ENCODE measurements at regions of chr19 and their contacts with region 1.

Region 1: GRCh38 chr19:15379083-15379995 is at the start of gene AKAP8:
- DNase-seq: peak; percentile 98
- H3K4me3 Mint-ChIP-seq: peak within 1 kb of the TSS; percentile 93
- H3K27ac Mint-ChIP-seq: peak within 1 kb of the TSS; percentile 96
- H3K4me1 Mint-ChIP-seq: peaks cover 48% of the 10 kb centered on the region
- H3K27me3 Mint-ChIP-seq: no peaks in the 10 kb centered on the region
- total RNA-seq, gene AKAP8: 27.1 to 30.3 TPM

Region 2: GRCh38 chr19:14689598-14690503 is 689.5 kb before region 1 on chr19 and contains the start of gene ZNF333:
- CTCF ChIA-PET with region 1: no interaction called
- intact Hi-C with region 1: loop called (anchors 5 kb)
- DNase-seq: peak; percentile 100
- H3K4me3 Mint-ChIP-seq: peak within 1 kb of the TSS; percentile 96
- H3K27ac Mint-ChIP-seq: peak within 1 kb of the TSS; percentile 99
- H3K4me1 Mint-ChIP-seq: peaks cover 18% of the 10 kb centered on the region
- H3K27me3 Mint-ChIP-seq: no peaks in the 10 kb centered on the region
- total RNA-seq, gene ZNF333: 28.6 to 31.7 TPM

Region 3: DNA sequence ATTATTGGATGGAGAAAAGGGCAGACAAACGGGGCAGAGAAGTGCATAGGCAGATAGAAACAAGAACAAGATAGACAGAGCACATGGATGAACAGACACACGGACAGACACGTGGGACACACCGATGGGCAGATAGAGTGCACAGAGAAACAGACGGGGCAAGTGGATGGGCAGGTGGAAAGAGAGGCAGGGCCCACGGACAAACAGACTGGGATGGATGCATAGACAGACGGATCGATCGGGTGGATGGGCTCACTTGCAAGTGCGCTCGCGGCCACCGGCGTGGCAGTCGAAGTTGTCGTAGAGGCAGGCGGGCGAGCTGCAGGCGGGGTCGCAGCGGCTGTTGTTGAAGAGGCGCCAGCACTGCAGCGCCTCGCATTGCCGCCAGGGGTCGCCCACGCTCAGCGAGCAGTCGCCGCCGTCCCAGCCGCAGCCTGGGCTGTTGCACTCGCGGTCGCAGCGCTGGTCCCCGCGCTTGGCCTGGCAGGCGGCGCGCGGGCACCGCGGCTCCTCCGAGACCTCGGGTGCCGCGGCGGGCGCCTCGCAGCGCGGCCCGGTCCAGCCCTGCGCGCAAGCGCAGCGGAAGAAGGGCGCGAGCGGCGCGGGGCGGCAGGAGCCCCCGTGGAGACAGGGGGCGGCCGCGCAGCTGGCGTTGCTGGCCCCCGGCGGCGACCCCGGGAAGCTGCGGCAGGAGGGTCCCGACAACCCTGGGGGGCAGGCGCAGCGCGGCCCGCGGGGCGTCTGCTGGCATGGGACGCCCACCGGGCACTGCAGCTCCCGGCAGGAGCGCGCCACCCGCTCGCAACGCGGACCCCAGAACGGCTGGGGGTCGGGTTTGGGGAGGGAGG is 201.8 kb before region 1 on chr19:
- CTCF ChIA-PET with region 1: no interaction called
- intact Hi-C with region 1: loop called (anchors 10 kb)
- DNase-seq: peak; percentile 84
- H3K4me3 Mint-ChIP-seq: peak overlapping the region; percentile 24
- H3K27ac Mint-ChIP-seq: no peak overlapping the region
- H3K4me1 Mint-ChIP-seq: peaks cover 2% of the 10 kb centered on the region
- H3K27me3 Mint-ChIP-seq: peaks cover 3% of the 10 kb centered on the region

Region 4: GRCh38 chr19:15332311-15332996 is 46.9 kb before region 1 on chr19 and contains the start of gene BRD4:
- CTCF ChIA-PET with region 1: no interaction called
- intact Hi-C with region 1: loop called (anchors 1 kb)
- DNase-seq: peak; percentile 73
- H3K4me3 Mint-ChIP-seq: peak within 1 kb of the TSS; percentile 94
- H3K27ac Mint-ChIP-seq: peak within 1 kb of the TSS; percentile 93
- H3K4me1 Mint-ChIP-seq: peaks cover 45% of the 10 kb centered on the region
- H3K27me3 Mint-ChIP-seq: no peaks in the 10 kb centered on the region
- total RNA-seq, gene BRD4: 109 to 111 TPM

Region 5: DNA sequence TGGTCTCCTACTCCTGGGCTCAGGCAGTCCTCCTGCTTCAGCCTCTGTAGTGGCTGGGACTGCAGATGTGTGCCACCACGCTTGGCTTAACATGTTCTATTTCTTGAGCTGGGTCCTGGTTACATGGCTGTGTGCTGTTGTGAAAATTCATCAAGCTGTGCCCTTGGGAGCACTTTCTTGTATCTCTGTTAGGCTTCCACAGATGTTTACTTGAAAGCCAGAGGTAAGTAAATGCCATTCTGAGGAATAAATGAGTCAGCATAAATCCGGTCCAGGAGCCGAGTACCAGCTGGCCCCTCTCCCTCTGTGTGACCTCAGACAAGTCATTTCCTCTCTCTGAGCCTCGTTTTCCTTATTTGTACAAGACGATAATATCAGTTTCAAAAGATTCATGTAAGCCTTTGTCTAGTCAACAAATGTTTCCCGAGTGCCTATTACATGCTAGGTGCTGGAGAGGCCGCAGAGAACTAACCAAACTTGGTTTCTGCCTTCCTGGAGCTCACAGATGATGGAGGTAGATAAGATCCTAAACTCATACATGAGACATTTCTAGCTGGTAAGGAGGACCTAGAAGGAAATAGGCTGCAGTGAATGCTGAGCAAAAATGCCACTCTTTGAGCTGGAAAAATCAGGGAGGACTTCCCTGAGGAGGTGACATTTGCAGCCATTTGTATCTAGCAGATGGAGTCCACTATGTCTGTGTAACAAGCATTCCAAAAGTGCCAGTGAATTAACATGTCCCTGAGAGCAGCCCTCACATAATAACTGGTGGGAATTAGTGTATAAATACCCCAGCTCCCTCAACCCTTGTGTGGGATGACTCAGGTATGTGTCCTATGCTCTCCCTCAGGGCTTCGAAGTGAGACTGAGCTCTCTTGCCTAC is 87.8 kb after region 1 on chr19:
- CTCF ChIA-PET with region 1: interaction called, 6 read pairs
- intact Hi-C with region 1: loop called (anchors 1 kb)
- DNase-seq: peak; percentile 85
- H3K4me3 Mint-ChIP-seq: peak overlapping the region; percentile 34
- H3K27ac Mint-ChIP-seq: peak overlapping the region; percentile 93
- H3K4me1 Mint-ChIP-seq: peaks cover 56% of the 10 kb centered on the region
- H3K27me3 Mint-ChIP-seq: peaks cover 3% of the 10 kb centered on the region

Region 6: GRCh38 chr19:15587663-15588062 is 208.3 kb after region 1 on chr19:
- CTCF ChIA-PET with region 1: no interaction called
- intact Hi-C with region 1: no loop called
- DNase-seq: no peak
- H3K4me3 Mint-ChIP-seq: no peak overlapping the region
- H3K27ac Mint-ChIP-seq: no peak overlapping the region
- H3K4me1 Mint-ChIP-seq: peaks cover 5% of the 10 kb centered on the region
- H3K27me3 Mint-ChIP-seq: peaks cover 14% of the 10 kb centered on the region

Measured in activated naive CD4-positive, alpha-beta T cell treated with anti-CD3 and anti-CD28 coated beads for 36 hours (primary cell).